ENCODE measurements at regions of chrX and their contacts with region 1.

Region 1: DNA sequence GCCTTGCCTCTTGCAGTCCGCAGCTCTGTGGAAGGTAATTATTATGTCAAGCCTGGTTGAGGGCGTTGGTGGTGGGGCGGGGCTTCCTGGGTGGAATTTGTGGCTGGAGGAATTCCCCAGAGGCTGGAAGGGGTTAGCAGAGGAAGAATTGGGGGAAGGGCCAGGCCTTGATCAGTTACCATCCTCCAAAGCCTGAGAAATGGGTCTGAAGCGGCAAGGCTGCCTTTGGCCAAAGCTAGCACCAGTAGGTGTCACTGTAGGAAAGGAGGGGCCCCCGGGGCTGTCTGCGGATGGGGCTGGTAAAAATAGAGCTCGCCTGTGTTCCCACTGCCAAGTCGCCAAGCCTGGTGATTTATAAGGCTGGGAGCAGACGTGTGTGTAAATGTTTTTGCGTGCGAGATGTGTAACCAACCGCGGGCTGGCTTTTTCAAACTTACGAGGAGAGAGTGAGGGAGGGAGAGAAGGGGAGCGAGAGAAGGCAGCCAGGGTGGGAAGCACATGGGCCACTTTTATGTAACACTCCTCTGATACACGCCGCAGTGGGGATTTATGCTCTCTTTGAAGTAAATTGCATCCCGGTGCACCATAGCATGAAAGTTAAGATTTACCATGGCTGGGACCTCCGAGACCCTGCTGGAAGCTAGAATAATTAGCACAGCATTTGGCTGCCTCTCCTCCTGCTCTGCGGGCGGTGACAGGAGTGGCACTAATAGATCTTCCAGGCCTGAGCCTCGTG is 366.9 kb downstream of the BCOR start:
- DNase-seq: peak; percentile 71
- H3K4me3 ChIP-seq: no peak overlapping the region
- H3K27ac ChIP-seq: peak overlapping the region; percentile 2
- H3K4me1 ChIP-seq: peaks cover 29% of the 10 kb centered on the region
- H3K27me3 ChIP-seq: no peaks in the 10 kb centered on the region
- CTCF ChIP-seq: peak; percentile 47 to 60
- POLR2A ChIP-seq: no peak

Region 2: GRCh38 chrX:39688576-39689375 is 42.1 kb before region 1 on chrX:
- CTCF ChIA-PET with region 1: no interaction called
- POLR2A ChIA-PET with region 1: no interaction called
- dilution Hi-C with region 1: no loop called
- intact Hi-C with region 1: loop called (anchors 5 kb)
- DNase-seq: peak; percentile 18
- H3K4me3 ChIP-seq: peak overlapping the region in 2 of 3 experiments; percentile 23 to 40
- H3K27ac ChIP-seq: no peak overlapping the region
- H3K4me1 ChIP-seq: peaks cover 10% of the 10 kb centered on the region
- H3K27me3 ChIP-seq: peaks cover 0 to 4% of the 10 kb centered on the region in 2 experiments
- CTCF ChIP-seq: no peak
- POLR2A ChIP-seq: no peak

Region 3: GRCh38 chrX:39808471-39808917 is 77.7 kb after region 1 on chrX:
- CTCF ChIA-PET with region 1: interaction called, 15 read pairs
- POLR2A ChIA-PET with region 1: no interaction called
- dilution Hi-C with region 1: no loop called
- intact Hi-C with region 1: loop called (anchors 1 kb)
- DNase-seq: peak; percentile 74
- H3K4me3 ChIP-seq: no peak overlapping the region
- H3K27ac ChIP-seq: peak overlapping the region; percentile 92
- H3K4me1 ChIP-seq: peaks cover 25% of the 10 kb centered on the region
- H3K27me3 ChIP-seq: no peaks in the 10 kb centered on the region
- CTCF ChIP-seq: no peak
- POLR2A ChIP-seq: no peak

Region 4: DNA sequence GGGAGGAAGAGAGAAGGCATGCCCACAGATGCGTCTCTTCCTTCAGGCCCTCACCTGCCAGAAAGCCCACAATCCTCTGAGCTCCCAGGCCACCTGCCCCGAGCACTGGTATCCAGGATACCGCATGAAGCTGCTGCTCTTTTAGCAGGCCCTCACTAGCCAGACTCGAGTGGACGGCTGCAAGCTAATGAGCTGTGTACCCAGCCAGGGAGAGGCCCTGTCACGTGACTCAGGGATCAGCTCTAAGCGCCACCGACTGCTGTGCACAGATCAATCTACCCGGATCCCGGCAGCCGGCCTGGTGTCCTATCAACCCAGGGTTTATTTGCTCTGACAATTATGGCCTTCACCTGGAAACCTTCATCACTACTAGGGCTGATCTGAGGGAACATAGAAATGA is 327.9 kb after region 1 on chrX:
- CTCF ChIA-PET with region 1: interaction called, 21 read pairs
- POLR2A ChIA-PET with region 1: no interaction called
- dilution Hi-C with region 1: no loop called
- intact Hi-C with region 1: no loop called
- DNase-seq: no peak
- H3K4me3 ChIP-seq: no peak overlapping the region
- H3K27ac ChIP-seq: no peak overlapping the region
- H3K4me1 ChIP-seq: peaks cover 6% of the 10 kb centered on the region
- H3K27me3 ChIP-seq: no peaks in the 10 kb centered on the region
- CTCF ChIP-seq: no peak
- POLR2A ChIP-seq: no peak

Region 5: GRCh38 chrX:40153335-40154249 is 422.8 kb after region 1 on chrX:
- CTCF ChIA-PET with region 1: interaction called, 3 read pairs
- POLR2A ChIA-PET with region 1: no interaction called
- dilution Hi-C with region 1: no loop called
- intact Hi-C with region 1: loop called (anchors 5 kb)
- DNase-seq: no peak
- H3K4me3 ChIP-seq: peak overlapping the region; percentile 7 to 38 (median 15)
- H3K27ac ChIP-seq: peak overlapping the region; percentile 12
- H3K4me1 ChIP-seq: peaks cover 32% of the 10 kb centered on the region
- H3K27me3 ChIP-seq: no peaks in the 10 kb centered on the region
- CTCF ChIP-seq: no peak
- POLR2A ChIP-seq: no peak